ENCODE measurements at regions of chr1 and their contacts with region 1.

Region 1: GRCh38 chr1:101309334-101310311 is 72.8 kb downstream of the S1PR1 start:
- DNase-seq: peak; percentile 72
- H3K4me3 Mint-ChIP-seq: peak overlapping the region; percentile 74
- H3K27ac Mint-ChIP-seq: peak overlapping the region; percentile 92
- H3K4me1 Mint-ChIP-seq: peaks cover 62% of the 10 kb centered on the region
- H3K27me3 Mint-ChIP-seq: peaks cover 15% of the 10 kb centered on the region

Region 2: DNA sequence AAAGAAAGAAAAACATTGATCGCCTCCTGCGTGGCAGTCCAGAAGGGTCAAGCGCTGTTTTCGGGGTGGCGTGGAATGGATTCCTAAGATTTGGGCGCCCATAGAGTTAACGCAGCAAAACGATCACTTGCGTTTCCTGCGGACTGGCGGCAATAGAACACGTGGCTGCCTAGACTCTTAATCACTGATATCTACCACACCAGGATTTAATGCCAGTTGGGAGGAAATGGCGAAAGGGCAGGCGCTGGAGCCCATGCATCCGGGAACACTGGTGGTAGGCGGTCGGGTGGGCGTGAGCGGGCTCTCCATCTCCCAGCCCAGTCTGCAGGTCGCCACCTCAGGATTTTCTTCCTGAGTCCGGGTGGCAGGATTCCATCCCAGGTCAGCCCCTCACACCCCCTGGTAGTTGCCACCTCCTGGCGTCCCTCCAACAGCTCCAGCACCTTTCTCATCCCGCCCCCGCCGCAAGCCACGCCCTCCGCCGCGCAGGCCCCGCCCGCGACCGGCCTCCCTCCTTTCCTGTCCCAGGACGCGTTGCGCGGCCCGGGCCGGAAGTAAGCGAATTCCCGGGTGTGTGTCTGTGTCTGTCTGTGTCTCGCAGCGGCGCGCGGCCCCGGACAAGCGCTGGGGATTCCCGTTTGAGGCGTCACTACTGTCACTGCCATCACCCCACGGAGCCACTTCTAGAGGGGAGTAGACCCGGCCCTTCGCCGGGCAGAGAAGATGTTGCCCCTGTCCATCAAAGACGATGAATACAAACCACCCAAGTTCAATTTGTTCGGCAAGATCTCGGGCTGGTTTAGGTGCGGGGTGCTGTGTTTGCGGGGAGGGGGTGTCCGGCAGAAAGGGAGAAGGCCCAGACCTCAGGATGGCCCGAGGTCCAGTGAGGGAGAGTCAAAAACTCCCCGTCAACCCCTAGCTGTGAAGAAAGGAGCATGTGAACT is 413.8 kb before region 1 on chr1 and contains the start of gene SLC30A7:
- CTCF ChIA-PET with region 1: interaction called, 17 read pairs
- POLR2A ChIA-PET with region 1: interaction called, 11 read pairs
- DNase-seq: peak; percentile 94
- H3K4me3 Mint-ChIP-seq: peak within 1 kb of the TSS; percentile 89
- H3K27ac Mint-ChIP-seq: peak within 1 kb of the TSS; percentile 94
- H3K4me1 Mint-ChIP-seq: peaks cover 48% of the 10 kb centered on the region
- H3K27me3 Mint-ChIP-seq: no peaks in the 10 kb centered on the region
- total RNA-seq, gene SLC30A7: 38.9 to 42.7 TPM

Region 3: GRCh38 chr1:101148980-101149379 is 160.6 kb before region 1 on chr1:
- CTCF ChIA-PET with region 1: no interaction called
- POLR2A ChIA-PET with region 1: no interaction called
- DNase-seq: no peak
- H3K4me3 Mint-ChIP-seq: no peak overlapping the region
- H3K27ac Mint-ChIP-seq: no peak overlapping the region
- H3K4me1 Mint-ChIP-seq: peaks cover 8% of the 10 kb centered on the region
- H3K27me3 Mint-ChIP-seq: no peaks in the 10 kb centered on the region

Region 4: GRCh38 chr1:101288491-101288944 is 21.1 kb before region 1 on chr1:
- CTCF ChIA-PET with region 1: interaction called, 72 read pairs
- POLR2A ChIA-PET with region 1: interaction called, 34 read pairs
- DNase-seq: peak; percentile 71
- H3K4me3 Mint-ChIP-seq: no peak overlapping the region
- H3K27ac Mint-ChIP-seq: no peak overlapping the region
- H3K4me1 Mint-ChIP-seq: peaks cover 85% of the 10 kb centered on the region
- H3K27me3 Mint-ChIP-seq: no peaks in the 10 kb centered on the region

Region 5: DNA sequence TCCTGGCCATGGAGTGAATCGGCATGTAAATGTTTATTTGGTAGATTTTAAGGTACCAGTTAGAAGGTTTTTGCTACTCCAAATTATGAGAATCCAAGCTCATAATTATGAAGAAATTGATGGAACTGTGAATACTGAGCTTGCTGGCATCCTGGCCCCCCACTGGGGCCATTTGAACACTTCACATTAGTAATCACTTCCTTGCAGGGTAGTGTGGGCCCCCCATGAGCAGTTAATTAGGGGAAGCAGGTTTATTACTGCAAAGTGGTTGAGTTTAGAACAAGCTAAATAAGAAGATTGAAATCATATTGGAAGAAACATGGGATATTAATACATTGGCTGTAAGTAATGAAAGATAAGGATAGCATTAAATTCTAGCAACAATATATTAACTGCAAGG is 13.9 kb after region 1 on chr1:
- CTCF ChIA-PET with region 1: interaction called, 22 read pairs
- POLR2A ChIA-PET with region 1: no interaction called
- DNase-seq: no peak
- H3K4me3 Mint-ChIP-seq: no peak overlapping the region
- H3K27ac Mint-ChIP-seq: no peak overlapping the region
- H3K4me1 Mint-ChIP-seq: no peaks in the 10 kb centered on the region
- H3K27me3 Mint-ChIP-seq: peaks cover 18% of the 10 kb centered on the region

Region 6: DNA sequence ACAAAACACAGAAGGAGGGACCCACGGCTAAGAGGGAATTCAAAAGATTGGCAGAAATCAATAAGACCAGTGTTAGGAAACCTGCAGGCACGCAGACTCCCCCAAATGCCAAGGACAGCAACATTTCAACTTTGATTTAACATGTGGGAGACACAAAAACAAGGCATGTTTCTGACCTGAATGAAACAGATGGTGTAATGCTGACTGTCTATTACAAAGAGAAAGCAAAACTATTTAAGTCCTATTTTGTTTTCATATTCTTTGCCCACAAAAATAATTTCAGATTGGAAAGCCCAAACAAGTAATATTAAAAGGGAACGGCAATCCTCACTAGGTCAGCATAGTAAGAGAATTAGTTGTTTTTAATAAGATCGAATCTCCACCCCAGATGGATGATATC is 35.1 kb after region 1 on chr1:
- CTCF ChIA-PET with region 1: interaction called, 35 read pairs
- POLR2A ChIA-PET with region 1: interaction called, 6 read pairs
- DNase-seq: no peak
- H3K4me3 Mint-ChIP-seq: no peak overlapping the region
- H3K27ac Mint-ChIP-seq: no peak overlapping the region
- H3K4me1 Mint-ChIP-seq: peaks cover 37% of the 10 kb centered on the region
- H3K27me3 Mint-ChIP-seq: peaks cover 5% of the 10 kb centered on the region

Region 7: DNA sequence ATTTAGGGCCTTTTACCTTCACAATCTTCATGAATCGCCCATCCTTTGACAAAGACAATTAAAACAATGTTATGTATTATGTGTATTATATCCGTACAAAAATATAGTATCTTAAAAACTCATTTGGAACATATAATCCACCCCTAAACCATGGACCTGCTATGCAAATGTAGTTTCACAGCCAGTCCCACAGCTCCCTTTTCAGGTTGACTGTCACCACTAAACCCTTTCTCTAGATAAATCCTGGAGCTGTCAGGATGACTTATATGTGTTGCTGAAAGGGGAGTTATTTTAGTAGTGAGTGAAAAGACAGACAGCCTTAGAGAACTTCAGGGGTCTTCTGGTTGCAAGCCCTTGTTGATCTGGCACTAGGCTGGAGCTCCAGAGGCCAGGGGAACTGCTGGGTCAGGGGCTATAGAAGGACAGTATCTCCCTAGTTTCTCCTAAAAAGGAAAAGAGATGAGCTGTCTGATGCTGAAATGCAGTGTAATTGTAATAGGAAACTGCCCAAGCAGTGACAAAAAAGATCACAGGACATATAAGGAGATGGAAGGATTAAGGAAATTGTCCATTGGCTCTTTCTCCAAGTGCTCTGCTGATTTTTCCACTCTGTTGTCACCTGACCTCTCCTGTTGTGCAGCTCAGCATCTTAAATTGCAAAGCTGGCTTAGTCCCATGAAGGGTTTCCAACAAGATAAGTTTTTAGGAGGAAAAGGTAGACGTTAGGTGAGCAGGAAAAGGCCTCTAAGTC is 54.9 kb after region 1 on chr1:
- CTCF ChIA-PET with region 1: interaction called, 152 read pairs
- POLR2A ChIA-PET with region 1: no interaction called
- DNase-seq: no peak
- H3K4me3 Mint-ChIP-seq: no peak overlapping the region
- H3K27ac Mint-ChIP-seq: no peak overlapping the region
- H3K4me1 Mint-ChIP-seq: no peaks in the 10 kb centered on the region
- H3K27me3 Mint-ChIP-seq: peaks cover 5% of the 10 kb centered on the region

Region 8: DNA sequence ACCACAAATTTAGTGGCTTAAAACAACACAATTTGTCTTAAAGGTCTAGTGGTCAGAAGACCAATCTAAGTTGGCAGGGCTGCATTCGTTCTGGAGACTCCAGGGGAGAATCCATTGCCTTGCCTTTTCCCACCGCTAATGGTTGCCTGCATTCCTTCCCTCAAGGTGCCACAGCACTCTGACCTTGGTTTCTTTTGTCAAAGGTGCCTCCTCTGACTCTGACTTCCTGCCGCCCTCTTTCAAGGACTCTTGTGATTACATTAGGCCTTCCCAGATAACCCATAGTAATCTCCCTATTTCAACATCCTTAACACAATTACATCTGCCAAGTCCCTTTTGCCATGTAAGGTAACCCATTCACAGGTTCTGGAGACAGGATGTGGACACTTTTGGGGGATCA is 72.5 kb after region 1 on chr1:
- CTCF ChIA-PET with region 1: no interaction called
- POLR2A ChIA-PET with region 1: no interaction called
- DNase-seq: no peak
- H3K4me3 Mint-ChIP-seq: no peak overlapping the region
- H3K27ac Mint-ChIP-seq: no peak overlapping the region
- H3K4me1 Mint-ChIP-seq: peaks cover 21% of the 10 kb centered on the region
- H3K27me3 Mint-ChIP-seq: no peaks in the 10 kb centered on the region

Region 9: DNA sequence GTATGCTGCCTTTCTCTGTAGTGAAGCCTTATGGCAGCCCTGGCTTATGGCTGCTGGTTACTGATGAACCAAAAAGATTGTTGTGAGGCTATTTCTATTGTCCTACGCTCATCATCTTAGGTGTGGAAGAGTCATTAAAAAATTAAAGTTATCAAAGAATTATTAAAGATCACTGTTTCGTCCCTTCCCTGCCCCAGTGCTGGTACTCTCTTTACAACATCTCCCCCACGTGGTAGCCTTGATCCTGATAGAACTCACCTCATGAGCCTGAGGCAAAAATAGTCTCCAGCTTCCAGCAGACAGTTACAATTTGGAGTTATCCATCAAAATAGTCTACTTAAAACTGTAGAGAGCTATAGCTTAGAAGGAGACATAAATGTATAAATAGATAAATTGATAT is 128.7 kb after region 1 on chr1:
- CTCF ChIA-PET with region 1: interaction called, 37 read pairs
- POLR2A ChIA-PET with region 1: interaction called, 3 read pairs
- DNase-seq: no peak
- H3K4me3 Mint-ChIP-seq: no peak overlapping the region
- H3K27ac Mint-ChIP-seq: no peak overlapping the region
- H3K4me1 Mint-ChIP-seq: no peaks in the 10 kb centered on the region
- H3K27me3 Mint-ChIP-seq: peaks cover 15% of the 10 kb centered on the region

Measured in activated CD4-positive, alpha-beta memory T cell treated with anti-CD3 and anti-CD28 coated beads, Interleukin-2, amount 10 ng/mL, durations not matched to agents 7 days and 5 days (primary cell).